Sciatic nerve (tissue), 2 donors: ENCODE measurements at regions of chr21 and their contacts with region 1.

Region 1: GRCh38 chr21:25895565-25896205 is 160.9 kb downstream of the GABPA start:
- DNase-seq: no peak
- ATAC-seq: peak; percentile 90

Region 2: DNA sequence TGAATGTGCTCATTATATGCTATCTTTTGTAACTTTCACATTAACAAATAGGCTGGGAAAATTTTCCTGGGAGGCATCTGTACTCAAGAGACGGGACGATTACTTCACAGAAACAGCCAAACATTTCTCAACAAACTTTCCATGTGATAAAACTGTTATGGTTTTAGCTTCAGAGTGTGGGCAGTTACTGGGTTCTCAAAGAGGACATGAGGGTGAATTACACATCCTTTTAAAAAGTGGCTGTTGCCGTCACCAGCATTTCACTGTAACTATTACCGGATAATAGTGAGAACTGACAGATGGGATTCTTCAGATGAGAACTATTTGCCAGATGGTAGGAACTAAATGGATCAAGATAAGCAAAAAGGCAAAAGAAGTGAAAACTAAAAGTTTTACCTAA is 165.8 kb after region 1 on chr21:
- intact Hi-C with region 1: no loop called
- DNase-seq: no peak
- ATAC-seq: peak; percentile 88

Region 3: GRCh38 chr21:26170471-26171257 is 275.0 kb after region 1 on chr21 and contains the start of gene APP:
- intact Hi-C with region 1: loop called (anchors 5 kb)
- DNase-seq: peak; percentile 93
- ATAC-seq: peak; percentile 82
- total RNA-seq, gene APP: 497 TPM